BJ (cell line): ENCODE measurements at regions of chr2 and their contacts with region 1.

Region 1: GRCh38 chr2:9370746-9371145 is 52.6 kb downstream of the ITGB1BP1 start:
- DNase-seq: no peak
- H3K4me3 ChIP-seq: no peak overlapping the region
- H3K27me3 ChIP-seq: no peaks in the 10 kb centered on the region
- CTCF ChIP-seq: no peak

Region 2: DNA sequence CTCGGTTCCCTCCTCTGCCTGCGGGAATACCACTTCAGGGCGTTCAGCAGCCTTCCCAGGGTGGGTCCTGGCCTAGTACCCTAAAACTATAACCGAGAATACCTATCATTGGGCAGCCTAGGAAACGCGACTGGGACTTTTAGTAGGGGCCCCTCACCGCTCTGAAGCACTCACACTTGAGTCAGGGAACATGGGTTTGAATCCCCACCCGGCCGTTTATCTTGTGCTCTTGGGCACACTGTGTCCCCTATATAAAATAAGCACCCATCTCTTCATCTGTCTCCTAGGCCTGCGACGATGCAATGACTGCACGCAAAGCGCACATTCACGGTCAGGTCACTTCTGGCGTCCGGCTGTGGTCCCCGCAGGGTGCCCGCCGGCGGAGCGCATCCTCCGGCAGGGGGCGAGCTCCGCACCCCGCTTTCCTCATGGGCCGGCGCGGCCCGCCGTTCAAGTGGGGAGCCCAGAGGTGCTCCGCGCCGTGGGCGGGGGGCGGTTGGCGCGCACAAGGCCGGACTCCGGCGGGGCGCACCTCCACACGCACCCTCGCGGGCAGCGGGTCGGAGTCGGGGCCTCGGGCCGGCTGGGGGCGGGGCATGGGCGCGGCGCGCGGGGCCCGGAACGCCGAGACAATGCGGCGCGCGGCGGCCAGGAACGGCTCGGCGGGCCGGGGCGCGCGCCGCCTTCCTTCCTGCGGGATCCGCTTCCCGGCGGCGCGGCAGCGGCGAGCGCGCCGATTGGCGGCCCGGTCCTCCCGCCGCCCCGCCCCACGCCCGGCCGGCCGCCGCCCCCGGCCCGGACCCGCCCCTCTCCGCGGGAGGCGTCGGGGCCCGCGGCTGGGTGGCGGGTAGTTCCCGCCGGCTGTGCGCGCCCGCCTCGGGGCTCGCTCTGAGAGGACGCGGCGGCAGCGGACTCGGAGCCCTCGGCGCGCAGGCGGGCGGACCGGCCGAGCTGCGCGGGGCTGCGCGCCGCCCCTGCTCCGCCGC is 164.5 kb before region 1 on chr2 and contains the start of gene ASAP2:
- CTCF ChIA-PET with region 1: interaction called, 11 read pairs
- POLR2A ChIA-PET with region 1: no interaction called
- DNase-seq: no peak
- H3K4me3 ChIP-seq: peak within 1 kb of the TSS; percentile 85
- H3K27me3 ChIP-seq: no peaks in the 10 kb centered on the region
- CTCF ChIP-seq: peak; percentile 76
- polyA plus RNA-seq, gene ASAP2: 14.1 and 18.2 TPM in 2 replicates

Region 3: DNA sequence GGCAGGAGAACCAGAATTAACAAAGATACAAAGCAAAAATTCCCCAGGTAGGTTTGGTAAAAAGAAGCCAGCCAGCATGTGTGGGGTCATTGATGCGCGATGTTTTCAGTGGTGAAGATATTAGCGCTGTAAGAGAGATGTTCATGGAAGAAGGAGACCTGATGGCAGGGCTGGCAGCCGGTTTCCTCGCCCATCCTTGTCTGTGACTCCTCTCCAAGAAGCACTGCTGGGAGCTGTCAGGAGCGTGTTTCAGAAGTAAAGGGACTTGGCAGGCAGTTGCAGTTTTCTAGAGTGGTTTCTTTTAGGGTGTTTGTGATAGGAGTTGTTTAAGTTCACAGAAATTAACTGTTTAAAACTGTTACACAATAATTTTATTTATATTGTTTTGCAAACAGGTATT is 497.1 kb after region 1 on chr2:
- CTCF ChIA-PET with region 1: no interaction called
- POLR2A ChIA-PET with region 1: no interaction called
- DNase-seq: no peak
- H3K4me3 ChIP-seq: no peak overlapping the region
- H3K27me3 ChIP-seq: no peaks in the 10 kb centered on the region
- CTCF ChIP-seq: no peak